ENCODE measurements at regions of chr11 and their contacts with region 1.

Region 1: DNA sequence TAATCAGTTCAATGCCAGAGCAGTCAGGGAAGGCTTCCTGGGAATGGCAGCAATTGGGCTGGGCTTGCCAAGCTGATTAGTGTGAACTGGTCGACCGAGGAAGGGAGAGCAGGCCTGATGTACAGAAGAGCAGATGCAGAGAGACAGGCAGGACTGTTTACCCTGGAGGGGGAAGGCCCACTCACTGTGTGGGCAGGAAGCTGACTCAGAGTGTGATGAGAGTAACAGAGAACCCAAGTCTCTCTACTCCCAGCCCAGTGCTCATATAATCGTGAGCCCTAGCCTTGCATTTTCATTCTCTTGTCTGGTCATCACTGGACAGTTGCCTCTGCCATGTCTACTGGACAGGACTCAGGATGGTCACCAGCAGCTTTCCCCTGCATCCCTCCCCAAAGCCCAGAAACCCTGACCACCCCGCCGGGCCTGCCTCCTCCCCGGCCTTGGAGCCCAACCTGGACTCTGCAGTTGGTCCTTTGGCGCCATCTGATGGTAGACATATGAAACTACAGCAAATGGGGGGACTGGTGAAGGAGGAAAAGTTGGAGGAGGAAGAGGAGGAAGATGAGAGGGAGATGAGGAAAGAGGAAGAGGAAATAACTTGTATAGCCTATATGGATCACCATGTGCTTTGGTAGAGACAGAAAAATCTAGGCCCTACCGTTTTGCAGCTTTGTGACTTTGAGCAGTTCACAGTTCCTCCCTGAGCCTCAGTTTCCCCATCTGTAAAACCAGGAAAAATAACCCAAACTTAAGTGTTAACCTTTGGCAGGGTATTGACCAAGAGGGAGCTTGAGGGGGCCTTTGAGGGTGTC is 43.4 kb upstream of the PRDM11 start:
- DNase-seq: peak; percentile 48
- ATAC-seq: peak; percentile 56
- H3K4me3 ChIP-seq: no peak overlapping the region
- H3K27ac ChIP-seq: no peak overlapping the region
- H3K4me1 ChIP-seq: peaks cover 17% of the 10 kb centered on the region
- H3K27me3 ChIP-seq: peaks cover 2 to 7% of the 10 kb centered on the region in 2 experiments; a peak in 1 of 5 replicates
- CTCF ChIP-seq: peak; percentile 88
- EP300 ChIP-seq: no peak
- POLR2A ChIP-seq: no peak
- RAD21 ChIP-seq: peak; percentile 71

Region 2: GRCh38 chr11:44927174-44927661 is 175.8 kb before region 1 on chr11:
- CTCF ChIA-PET with region 1: interaction called, 12 read pairs
- POLR2A ChIA-PET with region 1: no interaction called
- in situ Hi-C with region 1: no loop called
- intact Hi-C with region 1: no loop called
- DNase-seq: peak; percentile 43
- ATAC-seq: peak; percentile 89
- H3K4me3 ChIP-seq: no peak overlapping the region
- H3K27ac ChIP-seq: no peak overlapping the region
- H3K4me1 ChIP-seq: no peaks in the 10 kb centered on the region
- H3K27me3 ChIP-seq: peaks cover 4 to 10% of the 10 kb centered on the region in 2 experiments; a peak in 2 of 5 replicates
- CTCF ChIP-seq: peak; percentile 82
- EP300 ChIP-seq: no peak
- POLR2A ChIP-seq: no peak
- RAD21 ChIP-seq: peak; percentile 41; the same call in 1 of the 2 replicates

Region 3: DNA sequence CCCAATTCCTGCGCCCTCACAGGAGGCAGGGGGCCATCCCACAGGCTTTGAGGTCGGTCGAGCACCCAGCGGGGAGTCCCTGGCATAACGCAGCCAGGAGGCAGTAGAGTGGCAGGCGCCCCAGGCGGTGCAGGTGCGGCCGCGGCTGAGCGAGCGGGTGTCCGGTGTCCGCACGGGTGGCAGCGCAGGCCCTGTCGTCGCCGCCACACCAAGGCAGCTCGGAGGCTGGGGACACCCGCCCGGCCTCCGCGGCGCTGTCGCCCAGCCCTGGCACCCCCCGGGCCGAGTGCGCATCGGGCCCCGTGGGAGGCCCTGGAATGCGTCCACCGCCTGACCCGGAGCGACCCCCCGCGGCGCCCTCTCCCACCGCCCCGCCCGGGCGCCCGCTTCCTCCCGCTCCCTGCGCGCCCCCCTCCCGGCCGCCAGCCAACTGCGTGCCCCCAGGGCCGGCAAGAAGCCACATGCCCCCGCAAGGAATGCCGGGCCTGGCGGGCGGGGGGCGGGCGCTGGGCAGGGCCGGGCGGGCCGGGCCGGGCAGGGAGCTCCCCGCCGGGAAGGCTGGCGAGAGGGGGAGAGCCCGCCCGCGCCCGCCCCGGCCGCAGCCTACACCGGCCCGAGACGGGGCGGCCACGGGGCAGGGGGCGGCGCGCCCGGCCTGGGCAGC is 77.3 kb after region 1 on chr11:
- CTCF ChIA-PET with region 1: no interaction called
- POLR2A ChIA-PET with region 1: no interaction called
- in situ Hi-C with region 1: no loop called
- intact Hi-C with region 1: no loop called
- DNase-seq: no peak
- ATAC-seq: peak; percentile 73
- H3K4me3 ChIP-seq: peak overlapping the region; percentile 24 to 71 (median 58); a peak in 5 of 6 replicates
- H3K27ac ChIP-seq: peak overlapping the region; percentile 74
- H3K4me1 ChIP-seq: peaks cover 16% of the 10 kb centered on the region
- H3K27me3 ChIP-seq: no peaks in the 10 kb centered on the region; a peak in 1 of 5 replicates
- CTCF ChIP-seq: peak; percentile 47
- EP300 ChIP-seq: no peak
- POLR2A ChIP-seq: no peak; a peak in 1 of 4 replicates
- RAD21 ChIP-seq: peak; percentile 16; the same call in 1 of the 2 replicates

Region 4: GRCh38 chr11:45322891-45323600 is 220.0 kb after region 1 on chr11:
- CTCF ChIA-PET with region 1: no interaction called
- POLR2A ChIA-PET with region 1: no interaction called
- in situ Hi-C with region 1: loop called (anchors 10 kb)
- intact Hi-C with region 1: no loop called
- DNase-seq: no peak
- ATAC-seq: no peak
- H3K4me3 ChIP-seq: no peak overlapping the region
- H3K27ac ChIP-seq: no peak overlapping the region
- H3K4me1 ChIP-seq: no peaks in the 10 kb centered on the region
- H3K27me3 ChIP-seq: peaks cover 3 to 21% of the 10 kb centered on the region in 2 experiments; a peak in 2 of 5 replicates
- CTCF ChIP-seq: no peak
- EP300 ChIP-seq: no peak
- POLR2A ChIP-seq: no peak
- RAD21 ChIP-seq: no peak

Measured in HepG2 (cell line).